A549 (cell line): ENCODE measurements at regions of chr17 and their contacts with region 1.

Region 1: GRCh38 chr17:31216053-31216751 is 80.8 kb downstream of the OMG start:
- DNase-seq: peak; percentile 23 to 62
- ATAC-seq: peak in 1 of 2 experiments; percentile 65; a peak in 2 of 6 replicates
- H3K4me3 ChIP-seq: no peak overlapping the region
- H3K27ac ChIP-seq: no peak overlapping the region
- H3K4me1 ChIP-seq: peaks cover 6% of the 10 kb centered on the region; the same call in 2 of the 3 replicates
- CTCF ChIP-seq: peak; percentile 86
- EP300 ChIP-seq: no peak
- POLR2A ChIP-seq: no peak
- RAD21 ChIP-seq: peak; percentile 81 to 88

Region 2: DNA sequence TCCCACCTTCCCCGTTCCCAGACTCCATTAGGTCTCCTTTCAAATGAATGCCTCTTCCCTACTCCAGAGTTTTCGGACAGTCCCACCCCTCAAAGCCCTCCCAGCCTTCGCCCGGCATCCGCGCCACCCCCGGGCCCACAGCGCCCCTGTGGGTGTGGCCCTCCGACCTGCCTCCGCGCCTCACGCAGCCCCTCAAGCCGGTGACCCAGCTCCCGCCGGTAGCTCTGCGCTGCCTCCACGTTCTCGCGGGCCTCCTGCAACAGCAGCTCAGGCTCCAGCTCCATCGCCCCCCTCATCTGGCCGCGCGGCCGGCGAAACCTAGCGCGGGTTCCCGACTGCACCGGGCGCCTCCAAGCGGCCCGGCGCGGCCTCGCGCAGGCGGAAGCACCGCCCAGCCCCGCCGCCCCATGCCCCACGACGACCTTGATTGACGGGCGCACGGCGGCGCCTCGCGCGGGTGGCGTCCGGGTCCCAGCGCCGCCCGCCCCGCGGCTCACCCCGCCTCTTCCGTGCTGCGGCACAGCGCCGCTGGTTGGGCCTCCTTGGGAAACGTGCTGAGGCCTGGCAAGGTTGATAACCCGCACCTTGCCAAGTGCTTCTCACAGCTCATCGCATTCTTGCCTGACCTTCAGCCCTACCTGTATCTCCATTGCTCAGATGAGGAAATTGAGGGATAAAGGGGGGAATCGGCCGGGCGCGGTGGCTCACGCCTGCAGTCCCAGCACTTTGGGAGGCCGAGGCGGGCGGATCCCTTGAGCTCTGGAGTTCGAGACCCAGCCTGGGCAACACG is 391.7 kb before region 1 on chr17 and contains the start of gene CRLF3:
- CTCF ChIA-PET with region 1: interaction called, 13 read pairs
- POLR2A ChIA-PET with region 1: no interaction called
- DNase-seq: peak; percentile 94 to 98
- ATAC-seq: peak; percentile 98
- H3K4me3 ChIP-seq: peak within 1 kb of the TSS; percentile 67
- H3K27ac ChIP-seq: peak within 1 kb of the TSS; percentile 88 to 97
- H3K4me1 ChIP-seq: peaks cover 23% of the 10 kb centered on the region
- CTCF ChIP-seq: peak; percentile 73
- EP300 ChIP-seq: no peak
- POLR2A ChIP-seq: peak; percentile 89
- RAD21 ChIP-seq: peak; percentile 33 to 60; a peak in 4 of 5 replicates
- polyA plus RNA-seq, gene CRLF3: 26.6 and 31.0 TPM in 2 replicates

Region 3: GRCh38 chr17:31002047-31002446 is 214.2 kb before region 1 on chr17:
- CTCF ChIA-PET with region 1: interaction called, 18 read pairs
- POLR2A ChIA-PET with region 1: no interaction called
- DNase-seq: no peak
- ATAC-seq: no peak
- H3K4me3 ChIP-seq: no peak overlapping the region
- H3K27ac ChIP-seq: no peak overlapping the region
- H3K4me1 ChIP-seq: no peaks in the 10 kb centered on the region
- CTCF ChIP-seq: no peak
- EP300 ChIP-seq: no peak
- POLR2A ChIP-seq: no peak
- RAD21 ChIP-seq: no peak

Region 4: DNA sequence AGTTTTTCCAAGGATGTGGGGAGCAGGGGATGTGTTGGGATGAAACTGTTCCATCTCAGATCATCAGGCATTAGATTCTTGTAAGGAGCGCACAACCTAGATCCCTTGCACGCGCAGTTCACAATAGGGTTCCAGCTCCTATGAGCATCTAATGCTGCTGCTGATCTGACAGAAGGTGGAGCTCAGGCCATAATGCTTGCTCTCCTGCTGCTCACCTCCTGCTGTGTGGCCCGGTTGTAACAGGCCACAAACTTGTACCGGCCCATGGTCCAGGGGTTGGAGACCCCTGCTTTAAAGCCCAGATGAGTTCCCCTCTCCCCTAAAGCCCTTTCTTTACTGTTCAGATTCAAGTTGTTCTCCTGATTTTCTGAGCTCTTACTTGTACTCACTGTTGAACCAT is 200.6 kb before region 1 on chr17:
- CTCF ChIA-PET with region 1: interaction called, 38 read pairs
- POLR2A ChIA-PET with region 1: no interaction called
- DNase-seq: no peak
- ATAC-seq: peak in 1 of 2 experiments; percentile 52; a peak in 3 of 6 replicates
- H3K4me3 ChIP-seq: no peak overlapping the region
- H3K27ac ChIP-seq: no peak overlapping the region
- H3K4me1 ChIP-seq: no peaks in the 10 kb centered on the region
- CTCF ChIP-seq: no peak
- EP300 ChIP-seq: no peak
- POLR2A ChIP-seq: no peak
- RAD21 ChIP-seq: peak; percentile 42 to 48; a peak in 4 of 5 replicates

Region 5: DNA sequence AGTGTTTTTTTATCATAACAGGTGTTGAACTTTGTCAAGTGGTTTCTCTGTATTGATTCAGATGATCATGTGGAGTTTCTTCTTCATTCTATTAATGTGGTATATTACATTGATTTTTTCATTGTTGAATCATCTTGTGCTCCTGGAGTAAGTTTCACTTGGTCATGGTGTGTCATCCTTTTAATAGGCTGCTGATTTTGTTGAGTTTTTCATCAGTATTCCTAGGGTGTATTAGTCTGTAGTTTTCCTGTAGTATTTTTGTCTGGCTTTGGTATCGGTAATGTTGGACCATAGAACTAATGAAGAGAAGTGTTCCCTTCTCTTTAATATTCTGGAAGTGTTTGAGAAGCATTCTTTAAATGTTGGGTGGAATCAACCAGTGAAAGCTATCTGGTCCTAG is 18.2 kb before region 1 on chr17:
- CTCF ChIA-PET with region 1: interaction called, 17 read pairs
- POLR2A ChIA-PET with region 1: no interaction called
- DNase-seq: no peak
- ATAC-seq: no peak
- H3K4me3 ChIP-seq: no peak overlapping the region
- H3K27ac ChIP-seq: no peak overlapping the region
- H3K4me1 ChIP-seq: peaks cover 13% of the 10 kb centered on the region; the same call in 2 of the 3 replicates
- CTCF ChIP-seq: no peak
- EP300 ChIP-seq: no peak
- POLR2A ChIP-seq: no peak
- RAD21 ChIP-seq: no peak

Region 6: DNA sequence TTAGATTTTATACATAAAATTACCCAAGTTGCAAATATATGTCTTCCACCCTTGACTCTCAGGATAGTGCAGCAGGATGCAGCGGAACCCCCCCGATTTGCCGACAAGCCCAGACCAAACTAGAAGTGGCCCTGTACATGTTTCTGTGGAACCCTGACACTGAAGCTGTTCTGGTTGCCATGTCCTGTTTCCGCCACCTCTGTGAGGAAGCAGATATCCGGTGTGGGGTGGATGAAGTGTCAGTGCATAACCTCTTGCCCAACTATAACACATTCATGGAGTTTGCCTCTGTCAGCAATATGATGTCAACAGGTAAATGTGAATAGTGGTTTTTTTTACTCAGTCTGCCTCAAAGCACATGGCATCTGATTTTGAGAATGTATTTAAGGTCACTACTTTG is 10.2 kb after region 1 on chr17:
- CTCF ChIA-PET with region 1: interaction called, 10 read pairs
- POLR2A ChIA-PET with region 1: no interaction called
- DNase-seq: no peak
- ATAC-seq: no peak
- H3K4me3 ChIP-seq: no peak overlapping the region
- H3K27ac ChIP-seq: no peak overlapping the region
- H3K4me1 ChIP-seq: no peaks in the 10 kb centered on the region
- CTCF ChIP-seq: no peak
- EP300 ChIP-seq: no peak
- POLR2A ChIP-seq: no peak
- RAD21 ChIP-seq: no peak

Region 7: GRCh38 chr17:31236137-31236536 is 19.9 kb after region 1 on chr17:
- CTCF ChIA-PET with region 1: interaction called, 11 read pairs
- POLR2A ChIA-PET with region 1: no interaction called
- DNase-seq: no peak
- ATAC-seq: no peak
- H3K4me3 ChIP-seq: no peak overlapping the region
- H3K27ac ChIP-seq: no peak overlapping the region
- H3K4me1 ChIP-seq: no peaks in the 10 kb centered on the region
- CTCF ChIP-seq: no peak
- EP300 ChIP-seq: no peak
- POLR2A ChIP-seq: no peak
- RAD21 ChIP-seq: no peak

Region 8: GRCh38 chr17:31266042-31266441 is 49.8 kb after region 1 on chr17:
- CTCF ChIA-PET with region 1: no interaction called
- POLR2A ChIA-PET with region 1: no interaction called
- DNase-seq: peak in 1 of 2 experiments; percentile 25
- ATAC-seq: 0 out of 6 replicates have a peak, but pooled peaks of 1 of the 2 experiments have one; percentile 48
- H3K4me3 ChIP-seq: no peak overlapping the region
- H3K27ac ChIP-seq: no peak overlapping the region
- H3K4me1 ChIP-seq: peaks cover 32% of the 10 kb centered on the region
- CTCF ChIP-seq: peak; percentile 37
- EP300 ChIP-seq: no peak
- POLR2A ChIP-seq: no peak
- RAD21 ChIP-seq: peak in 1 of 2 experiments; percentile 23; a peak in 2 of 5 replicates